Activated naive CD4-positive, alpha-beta T cell treated with anti-CD3 and anti-CD28 coated beads for 36 hours (primary cell): ENCODE measurements at regions of chr21 and their contacts with region 1.

Region 1: DNA sequence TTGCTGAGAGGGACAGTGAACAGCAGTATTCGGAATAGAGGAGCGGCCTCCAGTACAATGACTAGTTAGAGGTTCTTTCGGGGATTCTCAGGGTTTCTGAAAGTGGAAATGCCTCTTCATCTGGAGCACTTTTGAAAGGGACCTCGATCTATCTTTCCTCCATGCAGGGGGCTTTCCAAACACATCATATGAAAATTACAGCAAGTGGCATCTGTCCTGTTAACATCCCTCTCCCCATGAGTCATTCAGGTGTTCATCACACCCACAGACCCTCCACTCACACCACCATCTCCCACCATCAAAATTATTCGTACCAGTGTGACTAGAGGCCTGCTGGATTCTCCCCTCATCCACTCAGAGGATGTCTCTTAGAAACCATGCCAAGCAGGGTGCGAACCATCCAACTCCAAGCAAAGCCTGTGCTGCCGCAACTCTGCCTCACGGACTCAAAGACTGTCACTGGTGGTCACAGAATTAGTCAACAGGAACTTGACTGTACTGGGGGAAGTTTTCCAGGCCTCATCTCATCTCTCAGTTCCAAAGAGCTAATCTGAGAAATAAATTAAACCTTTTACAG is 211.1 kb downstream of the MRPL39 start:
- DNase-seq: peak; percentile 89
- H3K4me3 Mint-ChIP-seq: peak overlapping the region; percentile 41
- H3K27ac Mint-ChIP-seq: peak overlapping the region; percentile 81
- H3K4me1 Mint-ChIP-seq: peaks cover 18% of the 10 kb centered on the region
- H3K27me3 Mint-ChIP-seq: peaks cover 2% of the 10 kb centered on the region

Region 2: GRCh38 chr21:24881511-24881910 is 514.7 kb before region 1 on chr21:
- CTCF ChIA-PET with region 1: no interaction called
- intact Hi-C with region 1: no loop called
- DNase-seq: no peak
- H3K4me3 Mint-ChIP-seq: no peak overlapping the region
- H3K27ac Mint-ChIP-seq: no peak overlapping the region
- H3K4me1 Mint-ChIP-seq: no peaks in the 10 kb centered on the region
- H3K27me3 Mint-ChIP-seq: no peaks in the 10 kb centered on the region

Region 3: DNA sequence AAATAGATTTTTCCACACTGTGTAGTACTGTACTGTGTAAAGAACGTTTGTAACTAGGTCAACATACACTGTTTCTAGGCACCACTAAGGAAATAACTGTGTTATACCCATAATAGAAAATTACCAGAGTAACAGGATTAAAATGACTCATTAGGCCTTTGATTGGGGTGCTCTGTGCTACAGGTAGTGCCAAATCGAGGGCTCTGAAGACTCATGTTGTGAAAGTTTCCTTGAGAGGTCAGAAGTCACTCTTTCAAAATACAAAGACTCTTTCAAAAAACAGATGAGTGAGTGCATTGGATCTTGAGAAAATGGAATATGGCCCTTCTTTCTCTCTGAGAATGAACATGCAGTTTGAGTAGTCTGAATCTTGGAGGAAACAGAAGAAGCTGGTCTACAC is 68.1 kb after region 1 on chr21:
- CTCF ChIA-PET with region 1: no interaction called
- intact Hi-C with region 1: loop called (anchors 2 kb)
- DNase-seq: peak; percentile 51
- H3K4me3 Mint-ChIP-seq: peak overlapping the region; percentile 11
- H3K27ac Mint-ChIP-seq: peak overlapping the region; percentile 90
- H3K4me1 Mint-ChIP-seq: peaks cover 69% of the 10 kb centered on the region
- H3K27me3 Mint-ChIP-seq: no peaks in the 10 kb centered on the region

Region 4: DNA sequence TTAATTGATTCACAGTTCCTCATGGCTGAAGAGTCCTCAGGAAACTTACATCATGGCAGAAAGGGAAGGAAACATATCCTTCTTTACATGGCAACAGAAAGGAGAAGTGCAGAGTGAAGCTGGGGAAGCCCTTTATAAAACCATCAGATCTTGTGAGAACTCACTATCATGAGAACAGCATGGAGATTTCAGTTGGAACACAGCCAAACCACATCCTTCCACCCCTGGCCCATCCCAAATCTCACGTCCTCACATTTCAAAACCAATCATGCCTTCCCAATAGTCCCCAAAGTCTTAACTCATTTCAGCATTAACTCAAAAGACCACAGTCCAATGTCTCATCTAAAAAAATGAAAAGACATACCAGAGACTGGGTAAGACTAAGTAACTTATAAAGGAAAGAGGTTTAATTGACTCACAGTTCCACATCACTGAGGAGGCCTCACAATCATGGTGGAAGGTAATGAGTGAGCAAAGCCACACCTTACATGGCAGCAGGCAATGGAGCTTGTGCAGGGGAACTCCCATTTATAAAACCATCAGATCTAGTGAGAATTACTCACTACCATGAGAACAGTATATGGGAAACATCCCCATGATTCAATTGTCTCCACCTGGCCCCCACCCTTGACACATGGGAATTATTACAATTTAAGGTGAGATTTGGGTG is 105.9 kb after region 1 on chr21:
- CTCF ChIA-PET with region 1: no interaction called
- intact Hi-C with region 1: loop called (anchors 1 kb)
- DNase-seq: peak; percentile 87
- H3K4me3 Mint-ChIP-seq: peak overlapping the region; percentile 53
- H3K27ac Mint-ChIP-seq: peak overlapping the region; percentile 92
- H3K4me1 Mint-ChIP-seq: peaks cover 78% of the 10 kb centered on the region
- H3K27me3 Mint-ChIP-seq: no peaks in the 10 kb centered on the region

Region 5: GRCh38 chr21:25507522-25507921 is 111.3 kb after region 1 on chr21:
- CTCF ChIA-PET with region 1: no interaction called
- intact Hi-C with region 1: loop called (anchors 1 kb)
- DNase-seq: peak; percentile 55
- H3K4me3 Mint-ChIP-seq: no peak overlapping the region
- H3K27ac Mint-ChIP-seq: peak overlapping the region; percentile 70
- H3K4me1 Mint-ChIP-seq: peaks cover 75% of the 10 kb centered on the region
- H3K27me3 Mint-ChIP-seq: no peaks in the 10 kb centered on the region

Region 6: DNA sequence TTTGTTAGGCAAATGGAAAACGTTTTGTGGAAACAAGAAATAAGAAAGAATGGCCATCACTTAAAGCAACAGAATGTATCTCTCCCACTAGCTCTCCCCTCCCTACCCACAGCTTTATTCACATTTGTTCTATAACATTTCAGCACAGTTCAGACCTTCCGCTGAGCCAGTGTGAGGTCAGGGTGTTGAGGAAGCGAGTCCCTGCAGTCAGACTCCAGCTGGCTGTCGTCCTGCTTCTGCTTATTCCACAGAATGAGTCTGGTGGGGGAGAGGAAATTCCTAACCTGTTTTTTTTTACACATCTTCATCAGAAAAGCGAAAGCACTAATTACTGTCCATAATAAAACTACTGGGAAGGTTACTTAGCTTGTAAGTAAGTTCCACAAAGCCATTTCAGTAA is 172.0 kb after region 1 on chr21:
- CTCF ChIA-PET with region 1: no interaction called
- intact Hi-C with region 1: loop called (anchors 1 kb)
- DNase-seq: no peak
- H3K4me3 Mint-ChIP-seq: peak overlapping the region; percentile 91
- H3K27ac Mint-ChIP-seq: peak overlapping the region; percentile 96
- H3K4me1 Mint-ChIP-seq: peaks cover 40% of the 10 kb centered on the region
- H3K27me3 Mint-ChIP-seq: no peaks in the 10 kb centered on the region

Region 7: DNA sequence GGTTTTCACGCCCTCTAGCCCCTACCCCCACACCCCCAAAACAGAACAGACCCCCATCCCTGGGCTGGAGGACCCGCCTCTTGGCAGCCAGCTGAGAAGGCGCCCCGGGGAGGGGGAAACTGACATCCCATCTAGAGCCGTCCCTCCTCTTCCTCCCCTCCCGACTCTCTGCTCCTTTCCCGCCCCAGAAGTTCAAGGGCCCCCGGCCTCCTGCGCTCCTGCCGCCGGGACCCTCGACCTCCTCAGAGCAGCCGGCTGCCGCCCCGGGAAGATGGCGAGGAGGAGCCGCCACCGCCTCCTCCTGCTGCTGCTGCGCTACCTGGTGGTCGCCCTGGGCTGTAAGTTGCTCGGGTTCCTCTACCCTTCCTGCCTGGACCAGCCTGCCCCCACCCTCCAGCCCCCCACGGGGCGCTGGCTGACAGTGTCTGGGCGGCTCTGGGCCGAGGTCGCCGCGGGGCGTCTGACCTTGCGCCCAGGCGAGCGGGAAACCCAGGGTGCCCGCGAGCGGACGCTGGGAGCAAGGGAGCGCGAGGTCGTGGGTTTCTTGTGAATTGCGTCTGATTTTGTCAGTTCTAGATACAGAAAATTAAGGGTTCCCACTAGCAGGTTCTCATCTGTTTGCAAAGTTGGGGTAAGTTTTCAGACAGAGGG is 243.5 kb after region 1 on chr21:
- CTCF ChIA-PET with region 1: no interaction called
- intact Hi-C with region 1: loop called (anchors 1 kb)
- DNase-seq: peak; percentile 57
- H3K4me3 Mint-ChIP-seq: peak overlapping the region; percentile 67
- H3K27ac Mint-ChIP-seq: no peak overlapping the region
- H3K4me1 Mint-ChIP-seq: peaks cover 20% of the 10 kb centered on the region
- H3K27me3 Mint-ChIP-seq: peaks cover 31% of the 10 kb centered on the region